Activated B cell treated with CpG ODN at 0.5 μM for 24 hours (primary cell): ENCODE measurements at regions of chr2 and their contacts with region 1.

Region 1: DNA sequence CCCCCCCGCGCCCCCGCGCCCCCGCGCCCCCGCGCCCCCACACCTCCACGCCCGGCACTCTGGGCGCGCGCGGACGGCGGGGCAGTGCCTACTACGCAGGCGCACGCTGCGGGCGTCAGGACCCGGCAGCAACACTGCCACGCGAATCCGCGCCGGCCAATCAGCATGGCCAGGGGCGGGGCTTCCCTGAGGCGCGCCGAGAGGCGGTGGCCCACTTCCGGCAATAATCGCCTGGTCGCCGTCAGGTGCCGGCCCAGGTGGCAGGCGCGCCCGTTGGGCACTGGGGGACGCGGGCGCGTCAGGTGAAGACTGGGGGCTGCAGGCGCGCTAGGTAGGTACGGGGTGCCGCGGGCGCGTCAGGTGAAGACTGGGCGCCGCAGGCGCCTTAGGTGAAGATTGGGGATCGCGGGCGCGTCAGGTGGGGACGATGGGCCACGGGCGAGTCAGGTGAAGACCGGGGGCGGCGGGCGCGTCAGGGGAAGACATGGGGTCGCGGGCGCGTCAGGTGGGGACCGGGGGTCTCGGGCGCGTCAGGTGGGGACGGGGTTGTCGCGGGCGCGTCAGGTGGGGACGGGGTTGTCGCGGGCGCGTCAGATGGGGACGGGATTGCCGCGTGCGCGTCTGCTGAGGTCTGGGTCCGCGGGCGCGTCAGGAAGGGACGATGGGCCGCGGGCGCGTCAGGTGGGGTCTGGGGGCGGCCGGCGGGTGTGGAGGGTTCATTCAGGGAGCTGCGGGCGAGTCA is 219.1 kb downstream of the RTP5 start:
- DNase-seq: peak; percentile 89
- ATAC-seq: peak; percentile 93
- H3K4me3 Mint-ChIP-seq: peak overlapping the region; percentile 92
- H3K27ac Mint-ChIP-seq: peak overlapping the region; percentile 80
- H3K4me1 Mint-ChIP-seq: peaks cover 54% of the 10 kb centered on the region
- H3K27me3 Mint-ChIP-seq: no peaks in the 10 kb centered on the region
- CTCF ChIP-seq: no peak

Region 2: GRCh38 chr2:241788572-241788971 is 300.1 kb before region 1 on chr2:
- CTCF ChIA-PET with region 1: no interaction called
- POLR2A ChIA-PET with region 1: no interaction called
- intact Hi-C with region 1: no loop called
- DNase-seq: peak; percentile 23
- ATAC-seq: peak; percentile 87
- H3K4me3 Mint-ChIP-seq: peak overlapping the region; percentile 45
- H3K27ac Mint-ChIP-seq: peak overlapping the region; percentile 79
- H3K4me1 Mint-ChIP-seq: peaks cover 35% of the 10 kb centered on the region
- H3K27me3 Mint-ChIP-seq: no peaks in the 10 kb centered on the region
- CTCF ChIP-seq: no peak

Region 3: DNA sequence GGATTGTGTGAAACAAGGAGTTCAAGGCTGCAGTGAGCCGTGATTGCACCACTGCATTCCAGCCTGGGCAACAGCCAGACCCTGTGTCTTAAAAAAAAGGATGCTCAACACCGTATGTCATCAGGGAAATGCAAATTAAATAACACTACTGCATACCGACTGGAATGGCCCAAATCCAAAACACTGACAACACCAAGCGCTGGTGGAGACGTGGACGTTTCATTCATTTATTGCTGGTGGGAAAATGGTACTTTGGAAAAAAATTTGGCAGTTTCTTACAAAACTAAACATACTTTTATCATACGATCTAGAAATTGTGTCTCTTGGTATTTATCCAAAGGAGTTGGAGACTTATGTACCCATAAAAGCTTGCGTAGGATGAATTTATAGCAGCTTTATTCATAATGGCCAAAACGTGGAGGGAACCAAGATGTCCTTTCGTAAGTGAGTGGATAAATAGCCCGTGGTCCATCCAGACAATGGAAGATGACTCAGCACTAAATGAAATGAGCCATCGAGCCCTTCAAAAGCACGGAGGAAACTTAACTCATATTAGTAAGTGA is 255.5 kb before region 1 on chr2:
- CTCF ChIA-PET with region 1: no interaction called
- POLR2A ChIA-PET with region 1: no interaction called
- intact Hi-C with region 1: no loop called
- DNase-seq: no peak
- ATAC-seq: no peak
- H3K4me3 Mint-ChIP-seq: no peak overlapping the region
- H3K27ac Mint-ChIP-seq: no peak overlapping the region
- H3K4me1 Mint-ChIP-seq: no peaks in the 10 kb centered on the region
- H3K27me3 Mint-ChIP-seq: peaks cover 21% of the 10 kb centered on the region
- CTCF ChIP-seq: no peak

Region 4: GRCh38 chr2:241950413-241951315 is 138.0 kb before region 1 on chr2:
- CTCF ChIA-PET with region 1: interaction called, 3 read pairs
- POLR2A ChIA-PET with region 1: no interaction called
- intact Hi-C with region 1: loop called (anchors 5 kb)
- DNase-seq: peak; percentile 53
- ATAC-seq: peak; percentile 62
- H3K4me3 Mint-ChIP-seq: no peak overlapping the region
- H3K27ac Mint-ChIP-seq: no peak overlapping the region
- H3K4me1 Mint-ChIP-seq: peaks cover 9% of the 10 kb centered on the region
- H3K27me3 Mint-ChIP-seq: no peaks in the 10 kb centered on the region
- CTCF ChIP-seq: peak; percentile 31

Region 5: DNA sequence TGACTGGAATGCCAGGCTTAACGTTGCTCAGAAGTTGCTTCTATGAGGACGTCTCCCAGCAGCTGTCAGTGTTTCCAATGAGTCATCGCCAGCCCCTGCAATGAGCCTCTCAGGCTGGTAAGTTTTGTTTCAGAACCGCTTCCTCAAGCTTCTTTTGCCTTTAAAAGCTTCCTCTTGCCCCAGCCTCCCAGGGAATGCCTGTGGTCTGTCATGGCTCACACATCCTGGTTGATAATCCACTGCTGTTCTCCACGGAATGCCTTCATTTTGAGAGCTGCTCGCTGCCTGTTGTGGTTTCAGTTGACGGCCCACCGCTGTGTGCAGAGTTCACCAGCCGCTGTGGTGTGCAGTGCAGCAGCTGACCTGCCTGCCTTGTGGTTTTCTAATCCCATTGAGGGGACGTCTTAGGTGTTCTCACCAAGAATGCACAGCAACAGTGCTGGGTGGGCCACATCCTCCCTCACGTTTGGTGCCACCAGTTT is 122.7 kb before region 1 on chr2:
- CTCF ChIA-PET with region 1: no interaction called
- POLR2A ChIA-PET with region 1: no interaction called
- intact Hi-C with region 1: loop called (anchors 5 kb)
- DNase-seq: peak; percentile 49
- ATAC-seq: peak; percentile 77
- H3K4me3 Mint-ChIP-seq: peak overlapping the region; percentile 75
- H3K27ac Mint-ChIP-seq: peak overlapping the region; percentile 79
- H3K4me1 Mint-ChIP-seq: peaks cover 67% of the 10 kb centered on the region
- H3K27me3 Mint-ChIP-seq: no peaks in the 10 kb centered on the region
- CTCF ChIP-seq: no peak